H1 (cell line): ENCODE measurements at regions of chr2 and their contacts with region 1.

Region 1: GRCh38 chr2:27024188-27024587 is 8.6 kb upstream of the TMEM214 start:
- DNase-seq: peak; percentile 47 to 87
- H3K4me3 ChIP-seq: no peak overlapping the region
- H3K27ac ChIP-seq: no peak overlapping the region
- H3K4me1 ChIP-seq: peaks cover 0 to 4% (median under 1%) of the 10 kb centered on the region in 4 experiments; a peak in 1 of 7 replicates
- H3K27me3 ChIP-seq: no peaks in the 10 kb centered on the region; a peak in 1 of 7 replicates
- CTCF ChIP-seq: peak; percentile 79 to 81 (median 79)
- EP300 ChIP-seq: no peak
- POLR2A ChIP-seq: no peak
- RAD21 ChIP-seq: peak; percentile 52 to 63

Region 2: DNA sequence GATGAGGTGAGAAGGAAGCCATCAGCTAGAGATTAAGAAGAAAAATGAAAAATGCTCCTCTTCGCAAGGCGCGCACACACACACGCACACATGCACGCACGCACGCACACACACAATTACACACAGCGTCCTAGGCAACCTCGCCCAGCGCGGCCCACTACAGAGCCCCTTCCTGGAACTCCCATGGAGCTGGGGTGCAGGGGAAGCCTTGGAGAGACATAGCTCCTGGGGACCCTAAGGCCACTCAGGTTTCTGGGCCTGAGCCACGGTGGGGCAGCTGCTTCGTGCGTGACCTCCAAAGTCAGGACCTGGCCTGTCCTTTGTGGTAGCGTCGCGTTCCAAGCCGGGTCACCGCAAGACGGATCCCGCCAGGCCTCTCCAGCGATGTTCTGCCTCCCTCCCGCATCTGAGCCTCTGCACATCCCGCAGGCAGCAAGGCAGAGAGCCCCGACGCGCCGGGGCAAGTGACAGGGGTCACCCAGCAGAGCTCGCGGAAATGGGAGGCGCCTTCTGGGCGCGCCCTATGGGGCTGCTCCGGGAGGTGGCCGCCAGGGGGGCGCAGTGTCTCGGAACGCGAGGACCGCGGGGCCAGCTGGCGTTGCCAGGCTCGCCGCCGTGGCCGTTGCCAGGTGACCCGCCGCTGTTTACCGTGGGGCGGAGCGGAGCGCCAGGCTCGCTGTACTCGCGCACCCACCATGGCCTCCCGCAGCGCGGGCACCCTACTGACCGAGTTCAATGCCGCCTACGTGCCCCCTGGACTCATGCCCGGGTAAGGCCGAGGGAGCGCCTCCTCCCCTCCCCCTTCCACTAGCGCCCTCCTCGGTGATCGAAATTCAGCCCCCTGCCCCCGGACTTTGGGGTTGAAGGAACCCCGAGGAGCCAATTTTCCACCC is 462.0 kb before region 1 on chr2:
- CTCF ChIA-PET with region 1: no interaction called
- POLR2A ChIA-PET with region 1: no interaction called
- DNase-seq: no peak
- H3K4me3 ChIP-seq: peak overlapping the region in 2 of 4 experiments; percentile 19 to 35; a peak in 3 of 8 replicates
- H3K27ac ChIP-seq: no peak overlapping the region
- H3K4me1 ChIP-seq: peaks cover 0 to 24% (median 11%) of the 10 kb centered on the region in 4 experiments; a peak in 6 of 7 replicates
- H3K27me3 ChIP-seq: peaks cover 0 to 20% (median 9%) of the 10 kb centered on the region in 4 experiments; a peak in 5 of 7 replicates
- CTCF ChIP-seq: no peak
- EP300 ChIP-seq: no peak
- POLR2A ChIP-seq: no peak
- RAD21 ChIP-seq: no peak

Region 3: DNA sequence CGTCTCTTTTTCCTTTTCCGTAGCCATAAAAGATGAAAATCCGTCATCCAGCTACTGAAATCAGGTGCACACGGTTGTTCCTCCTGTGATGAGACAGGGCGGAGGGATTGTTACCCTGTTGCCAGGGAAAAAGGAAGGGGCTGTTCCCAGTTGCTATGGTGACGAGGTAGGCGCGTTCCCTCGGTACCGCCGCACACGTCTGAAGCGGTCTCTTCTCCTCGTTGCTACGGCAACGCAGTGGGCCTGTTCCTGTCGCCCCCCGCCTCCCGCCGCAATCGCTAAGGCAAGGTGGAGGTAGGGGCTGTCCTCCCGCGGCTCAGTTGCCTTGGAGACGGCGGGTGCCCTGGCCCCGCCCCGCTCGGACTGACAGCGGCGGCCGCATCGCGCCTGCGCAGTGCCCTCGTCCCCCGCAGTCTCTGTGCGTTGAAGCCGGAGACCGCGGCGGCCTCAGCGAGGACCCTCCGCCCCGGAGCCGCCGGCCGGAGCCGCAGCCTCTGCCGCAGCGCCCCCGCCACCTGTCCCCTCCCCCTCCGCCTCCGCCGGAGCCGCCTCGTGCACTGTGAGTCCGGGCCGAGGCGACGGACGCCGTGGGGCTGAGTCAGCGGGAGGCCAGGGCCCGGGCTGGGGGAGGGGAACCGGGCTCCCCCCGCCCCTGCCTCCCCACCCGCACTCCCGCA is 53.8 kb before region 1 on chr2 and contains the start of gene MAPRE3:
- CTCF ChIA-PET with region 1: interaction called, 416 read pairs
- POLR2A ChIA-PET with region 1: interaction called, 8 read pairs
- DNase-seq: peak; percentile 90 to 97
- H3K4me3 ChIP-seq: peak within 1 kb of the TSS; percentile 63 to 95 (median 90)
- H3K27ac ChIP-seq: no peak within 1 kb of the TSS
- H3K4me1 ChIP-seq: peaks cover 0 to 6% (median 4%) of the 10 kb centered on the region in 4 experiments; a peak in 5 of 7 replicates
- H3K27me3 ChIP-seq: peaks cover 0 to 16% (median 3%) of the 10 kb centered on the region in 4 experiments; a peak in 4 of 7 replicates
- CTCF ChIP-seq: no peak
- EP300 ChIP-seq: no peak
- POLR2A ChIP-seq: no peak
- RAD21 ChIP-seq: no peak
- total RNA-seq, gene MAPRE3: 6.6 and 7.5 TPM in 2 replicates

Region 4: DNA sequence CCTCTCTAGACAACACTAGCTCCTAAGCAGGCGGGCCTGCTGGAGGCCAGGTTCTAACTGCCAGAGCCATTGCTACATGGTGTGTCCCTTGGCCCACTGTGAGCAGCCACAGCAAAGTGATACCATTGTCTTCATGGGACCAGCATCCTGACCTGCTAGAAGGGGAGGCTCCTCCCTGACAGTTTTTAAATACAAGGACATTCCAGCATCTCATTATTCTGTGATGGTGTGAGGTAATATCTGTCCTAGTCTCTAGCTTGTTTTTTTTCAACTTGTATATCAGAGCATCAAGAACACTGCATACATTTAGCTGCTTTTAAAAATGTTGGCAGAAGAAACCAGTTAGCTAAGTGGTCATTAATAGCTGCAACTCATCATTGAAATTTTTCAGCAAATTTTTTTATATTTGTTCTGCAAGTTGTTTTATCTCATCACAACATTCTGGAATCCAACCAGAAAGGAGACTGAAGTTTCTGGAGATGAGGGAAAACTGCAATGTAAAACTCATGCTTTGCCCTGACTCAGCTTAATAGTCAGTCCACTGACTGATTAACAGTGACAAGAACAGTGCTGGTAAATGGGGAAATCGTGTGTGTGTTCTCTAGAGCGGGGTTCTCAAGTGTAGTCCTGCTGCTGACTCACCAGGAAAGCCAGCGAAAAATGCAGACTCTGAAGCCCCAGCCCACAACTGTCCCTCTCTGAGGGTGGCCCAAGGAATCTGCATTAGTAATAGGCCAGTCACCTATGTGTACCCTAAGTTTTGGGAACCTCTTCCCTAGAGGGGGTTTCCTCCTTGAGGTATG is 35.9 kb before region 1 on chr2:
- CTCF ChIA-PET with region 1: interaction called, 11 read pairs
- POLR2A ChIA-PET with region 1: no interaction called
- DNase-seq: no peak
- H3K4me3 ChIP-seq: no peak overlapping the region
- H3K27ac ChIP-seq: no peak overlapping the region
- H3K4me1 ChIP-seq: no peaks in the 10 kb centered on the region
- H3K27me3 ChIP-seq: no peaks in the 10 kb centered on the region
- CTCF ChIP-seq: no peak
- EP300 ChIP-seq: no peak
- POLR2A ChIP-seq: no peak
- RAD21 ChIP-seq: no peak

Region 5: DNA sequence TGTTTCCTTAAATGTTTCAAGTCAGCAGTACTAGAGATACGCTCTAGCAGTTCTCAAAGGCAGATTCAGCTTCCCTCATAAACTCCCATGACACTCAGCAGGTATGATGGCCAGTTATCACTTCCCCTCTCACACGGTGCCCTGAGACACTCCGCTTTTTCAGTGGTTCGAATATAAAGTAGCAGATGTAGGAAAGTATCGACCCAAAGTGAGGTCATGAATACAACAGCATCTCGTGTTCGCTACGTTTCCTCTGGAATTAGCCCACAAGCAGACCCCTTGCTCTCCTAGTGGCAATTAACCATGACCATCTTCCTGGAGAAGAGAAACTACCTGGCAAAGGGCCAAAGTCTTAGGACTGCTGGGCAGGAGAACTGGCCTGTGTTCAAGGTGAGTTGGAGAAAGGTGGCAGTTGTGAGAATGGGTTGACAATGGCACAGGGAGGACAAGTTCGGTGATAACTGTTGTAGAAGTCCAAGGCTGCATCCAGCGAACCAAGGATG is 18.0 kb after region 1 on chr2:
- CTCF ChIA-PET with region 1: interaction called, 41 read pairs
- POLR2A ChIA-PET with region 1: interaction called, 7 read pairs
- DNase-seq: no peak
- H3K4me3 ChIP-seq: no peak overlapping the region
- H3K27ac ChIP-seq: no peak overlapping the region
- H3K4me1 ChIP-seq: no peaks in the 10 kb centered on the region
- H3K27me3 ChIP-seq: no peaks in the 10 kb centered on the region
- CTCF ChIP-seq: no peak
- EP300 ChIP-seq: no peak
- POLR2A ChIP-seq: no peak
- RAD21 ChIP-seq: no peak

Region 6: GRCh38 chr2:27353762-27354596 is 329.8 kb after region 1 on chr2:
- CTCF ChIA-PET with region 1: no interaction called
- POLR2A ChIA-PET with region 1: no interaction called
- DNase-seq: no peak
- H3K4me3 ChIP-seq: no peak overlapping the region
- H3K27ac ChIP-seq: no peak overlapping the region
- H3K4me1 ChIP-seq: peaks cover 0 to 12% (median 4%) of the 10 kb centered on the region in 4 experiments; a peak in 4 of 7 replicates
- H3K27me3 ChIP-seq: no peaks in the 10 kb centered on the region
- CTCF ChIP-seq: no peak
- EP300 ChIP-seq: no peak
- POLR2A ChIP-seq: no peak
- RAD21 ChIP-seq: no peak